ENCODE measurements at regions of chr22 and their contacts with region 1.

Region 1: GRCh38 chr22:49936018-49936952 is 17.9 kb downstream of the CRELD2 start:
- DNase-seq: peak; percentile 91 to 96 (median 94)
- H3K4me3 ChIP-seq: peak overlapping the region in 2 of 4 donors; percentile 0 to 59
- H3K27ac ChIP-seq: peak overlapping the region in 4 of 5 donors; percentile 28 to 98 (median 74)
- H3K4me1 ChIP-seq: peaks cover 22 to 42% of the 10 kb centered on the region in 2 donors
- H3K27me3 ChIP-seq: no peaks in the 10 kb centered on the region
- CTCF ChIP-seq: no peak
- POLR2A ChIP-seq: peak in 1 of 2 donors; percentile 25

Region 2: DNA sequence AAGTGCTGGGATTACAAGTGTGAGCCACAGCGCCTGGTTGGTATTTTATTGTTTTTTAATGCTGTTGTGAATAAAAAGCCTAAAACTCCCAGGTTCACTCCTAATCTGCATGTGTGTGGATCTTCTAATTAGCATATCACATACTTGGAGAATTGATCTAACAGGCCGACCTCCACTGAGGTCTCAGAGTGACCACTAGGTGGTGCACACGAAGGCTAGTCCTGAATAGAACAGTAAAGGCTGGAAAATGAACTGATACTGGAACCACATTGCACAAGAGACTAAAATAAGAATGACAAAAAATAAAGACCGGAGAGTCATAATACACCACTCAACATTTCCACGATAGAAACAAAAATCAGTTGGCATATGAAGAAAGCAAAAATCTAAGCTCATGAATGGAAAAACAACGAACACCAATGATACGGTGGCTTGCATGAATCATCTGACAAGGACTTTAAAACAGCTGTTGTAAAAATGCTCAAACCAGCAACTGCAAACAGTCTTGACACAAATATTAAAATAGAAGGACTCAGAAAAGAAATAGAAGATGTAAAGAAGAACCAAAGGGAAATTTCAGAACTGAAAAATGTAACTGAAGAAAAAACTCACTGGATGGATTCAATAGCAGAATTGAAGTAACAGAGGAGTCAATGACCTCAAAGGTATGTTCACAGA is 43.4 kb after region 1 on chr22:
- intact Hi-C with region 1: loop called in 1 of 2 experiments (anchors 10 kb)
- DNase-seq: peak in 3 of 7 donors; percentile 33 to 62 (median 44)
- H3K4me3 ChIP-seq: no peak overlapping the region
- H3K27ac ChIP-seq: no peak overlapping the region
- H3K4me1 ChIP-seq: peaks cover 7 to 8% of the 10 kb centered on the region in 2 donors
- H3K27me3 ChIP-seq: peaks cover 16% of the 10 kb centered on the region
- CTCF ChIP-seq: peak; percentile 9 to 49 (median 36)
- POLR2A ChIP-seq: no peak

Region 3: GRCh38 chr22:50012716-50013181 is 76.5 kb after region 1 on chr22 and contains the start of gene IL17REL:
- intact Hi-C with region 1: no loop called
- DNase-seq: no peak
- H3K4me3 ChIP-seq: no peak within 1 kb of the TSS
- H3K27ac ChIP-seq: no peak within 1 kb of the TSS
- H3K4me1 ChIP-seq: no peaks in the 10 kb centered on the region
- H3K27me3 ChIP-seq: peaks cover 60% of the 10 kb centered on the region
- CTCF ChIP-seq: no peak
- POLR2A ChIP-seq: no peak
- total RNA-seq, gene IL17REL: not detected

Region 4: GRCh38 chr22:50034126-50035081 is 98.1 kb after region 1 on chr22:
- intact Hi-C with region 1: no loop called
- DNase-seq: no peak
- H3K4me3 ChIP-seq: no peak overlapping the region
- H3K27ac ChIP-seq: no peak overlapping the region
- H3K4me1 ChIP-seq: no peaks in the 10 kb centered on the region
- H3K27me3 ChIP-seq: no peaks in the 10 kb centered on the region
- CTCF ChIP-seq: no peak
- POLR2A ChIP-seq: no peak

Measured in adrenal gland (tissue), 19 donors.